ENCODE measurements at regions of chr3 and their contacts with region 1.

Region 1: DNA sequence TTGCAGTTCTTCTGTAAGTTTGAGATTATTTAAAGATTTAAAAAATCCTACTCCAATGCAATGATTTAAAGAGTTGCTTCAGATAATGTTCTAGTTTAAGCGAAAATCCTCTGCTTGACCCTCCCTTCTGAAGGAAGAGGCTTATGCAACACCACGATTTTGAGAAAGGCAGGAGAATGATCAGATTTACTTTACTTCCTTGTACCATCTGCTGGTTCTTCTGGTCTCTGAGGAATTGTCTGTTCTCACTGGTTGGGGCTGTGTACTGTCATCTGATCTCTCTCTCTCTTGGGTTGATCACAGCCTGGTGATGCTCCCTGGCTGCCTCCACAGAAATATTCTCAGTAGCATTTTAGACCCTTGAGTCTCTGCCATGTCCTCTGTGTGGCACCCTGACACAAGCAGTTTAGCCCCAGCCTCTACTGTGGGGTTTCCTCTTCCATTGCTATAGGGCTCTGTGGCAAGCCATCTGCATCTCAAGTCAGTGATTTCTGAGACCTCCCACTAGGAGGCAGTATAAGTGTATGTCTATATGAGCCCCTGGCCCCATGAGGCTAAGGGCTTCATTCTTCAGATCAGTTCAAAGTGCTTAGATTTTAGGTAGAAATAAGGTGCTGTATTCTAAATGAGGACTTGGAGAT is 50.8 kb upstream of the PLAAT1 start:
- DNase-seq: no peak
- ATAC-seq: no peak
- H3K4me3 ChIP-seq: no peak overlapping the region
- H3K27ac ChIP-seq: no peak overlapping the region
- H3K4me1 ChIP-seq: no peaks in the 10 kb centered on the region
- H3K27me3 ChIP-seq: no peaks in the 10 kb centered on the region

Region 2: DNA sequence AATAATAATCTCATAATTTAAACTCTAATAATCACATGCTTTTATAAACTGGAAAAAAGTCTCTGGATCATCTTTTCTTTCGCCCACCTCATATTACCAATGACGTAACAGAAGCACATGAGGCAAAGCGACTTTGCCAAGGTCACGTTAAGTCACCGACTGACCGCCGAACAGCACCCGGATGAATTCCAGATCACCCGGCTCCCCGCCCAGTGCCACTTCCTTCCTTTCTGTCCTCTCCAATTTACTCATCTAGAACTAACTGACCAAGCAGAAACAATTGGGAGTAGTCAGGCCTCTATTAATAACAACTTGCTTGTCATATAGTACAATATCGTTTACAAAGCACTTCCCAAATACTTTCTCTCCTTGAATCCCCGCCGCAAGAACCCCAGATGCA is 484.0 kb before region 1 on chr3:
- intact Hi-C with region 1: no loop called
- DNase-seq: no peak
- ATAC-seq: no peak
- H3K4me3 ChIP-seq: no peak overlapping the region
- H3K27ac ChIP-seq: no peak overlapping the region
- H3K4me1 ChIP-seq: no peaks in the 10 kb centered on the region
- H3K27me3 ChIP-seq: no peaks in the 10 kb centered on the region

Region 3: GRCh38 chr3:193289281-193289680 is 99.0 kb after region 1 on chr3:
- intact Hi-C with region 1: loop called in 1 of 2 experiments (anchors 10 kb)
- DNase-seq: no peak
- ATAC-seq: no peak
- H3K4me3 ChIP-seq: no peak overlapping the region
- H3K27ac ChIP-seq: no peak overlapping the region
- H3K4me1 ChIP-seq: no peaks in the 10 kb centered on the region
- H3K27me3 ChIP-seq: peaks cover 0 to 2% of the 10 kb centered on the region in 2 donors

Region 4: GRCh38 chr3:193347521-193348501 is 157.5 kb after region 1 on chr3:
- intact Hi-C with region 1: no loop called
- DNase-seq: no peak
- ATAC-seq: no peak
- H3K4me3 ChIP-seq: no peak overlapping the region
- H3K27ac ChIP-seq: no peak overlapping the region
- H3K4me1 ChIP-seq: no peaks in the 10 kb centered on the region
- H3K27me3 ChIP-seq: peaks cover 0 to 1% of the 10 kb centered on the region in 2 donors